Gastrocnemius medialis (tissue), 4 donors: ENCODE measurements at regions of chr14 and their contacts with region 1.

Region 1: DNA sequence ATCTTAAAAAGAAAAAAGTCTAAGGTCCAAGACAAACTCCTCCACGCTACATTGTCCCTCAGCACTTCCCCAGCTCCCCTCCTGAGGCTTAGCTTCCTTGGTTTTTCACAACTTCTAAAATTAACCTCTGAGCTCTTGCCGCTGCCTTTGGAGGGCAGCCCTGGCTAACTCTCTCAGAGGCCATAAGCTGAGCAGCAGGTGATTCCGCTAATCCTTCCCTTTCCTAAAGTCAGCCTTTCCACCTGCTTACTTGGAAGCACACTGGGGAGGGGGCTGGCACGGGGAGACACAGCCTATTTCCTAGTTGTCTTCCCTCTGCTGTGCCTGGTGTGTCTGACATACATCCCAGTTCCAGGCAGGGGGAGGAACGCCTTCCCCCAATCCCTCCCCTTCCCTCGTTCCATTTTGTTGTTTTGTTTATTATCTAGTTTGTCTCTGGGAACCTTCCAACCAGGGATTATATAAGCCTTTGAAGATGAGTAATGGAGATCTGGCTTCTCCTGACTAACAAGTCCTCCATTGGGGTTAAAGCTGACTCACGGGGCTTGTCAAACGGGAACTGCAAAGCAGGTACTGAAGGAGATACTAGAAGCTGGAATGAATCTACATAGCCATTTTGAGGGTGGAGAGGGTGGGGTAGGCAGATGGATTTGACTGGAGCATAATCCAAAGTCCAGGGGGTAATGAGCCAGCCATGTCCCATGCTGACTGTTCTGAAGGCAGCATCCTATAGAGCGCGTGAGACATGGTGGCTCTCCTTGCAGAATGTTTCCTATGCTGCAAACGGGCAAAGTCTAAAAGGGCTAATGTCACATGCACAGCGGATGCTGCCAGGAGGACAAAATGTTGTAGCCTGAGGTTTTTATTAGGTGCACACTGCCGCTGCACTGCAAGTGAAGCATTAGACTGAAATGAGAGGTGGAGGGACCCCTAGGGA is 230.8 kb downstream of the FOXN3 start:
- DNase-seq: peak; percentile 72 to 80
- ATAC-seq: peak; percentile 78 to 84
- H3K4me3 ChIP-seq: peak overlapping the region in 3 of 4 donors; percentile 30 to 36 (median 33)
- H3K27ac ChIP-seq: peak overlapping the region; percentile 89 to 93 (median 92)
- H3K4me1 ChIP-seq: peaks cover 51 to 54% of the 10 kb centered on the region in 2 donors
- H3K27me3 ChIP-seq: no peaks in the 10 kb centered on the region
- CTCF ChIP-seq: no peak
- POLR2A ChIP-seq: peak in 1 of 2 donors; percentile 33

Region 2: GRCh38 chr14:89226801-89227495 is 40.8 kb after region 1 on chr14:
- in situ Hi-C with region 1: no loop called
- intact Hi-C with region 1: loop called (anchors 2 kb)
- DNase-seq: no peak
- ATAC-seq: no peak
- H3K4me3 ChIP-seq: no peak overlapping the region
- H3K27ac ChIP-seq: peak overlapping the region in 3 of 4 donors; percentile 20 to 90 (median 79)
- H3K4me1 ChIP-seq: peaks cover 40 to 56% of the 10 kb centered on the region in 2 donors
- H3K27me3 ChIP-seq: no peaks in the 10 kb centered on the region
- CTCF ChIP-seq: no peak
- POLR2A ChIP-seq: no peak

Region 3: GRCh38 chr14:89252887-89253547 is 66.8 kb after region 1 on chr14:
- in situ Hi-C with region 1: no loop called
- intact Hi-C with region 1: loop called (anchors 2 kb)
- DNase-seq: peak in 1 of 2 donors; percentile 36
- ATAC-seq: peak; percentile 37 to 39
- H3K4me3 ChIP-seq: no peak overlapping the region
- H3K27ac ChIP-seq: peak overlapping the region in 2 of 4 donors; percentile 41 to 50
- H3K4me1 ChIP-seq: peaks cover 55 to 65% of the 10 kb centered on the region in 2 donors
- H3K27me3 ChIP-seq: no peaks in the 10 kb centered on the region
- CTCF ChIP-seq: peak in 3 of 5 experiments; percentile 28 to 47 (median 30)
- POLR2A ChIP-seq: no peak

Region 4: GRCh38 chr14:89303457-89304435 is 117.6 kb after region 1 on chr14:
- in situ Hi-C with region 1: no loop called
- intact Hi-C with region 1: loop called (anchors 1 kb)
- DNase-seq: peak; percentile 53 to 59
- ATAC-seq: peak; percentile 90 to 93
- H3K4me3 ChIP-seq: peak overlapping the region; percentile 38 to 42 (median 40)
- H3K27ac ChIP-seq: peak overlapping the region; percentile 90 to 95 (median 92)
- H3K4me1 ChIP-seq: peaks cover 66 to 77% of the 10 kb centered on the region in 2 donors
- H3K27me3 ChIP-seq: no peaks in the 10 kb centered on the region
- CTCF ChIP-seq: no peak
- POLR2A ChIP-seq: peak; percentile 46 to 73

Region 5: GRCh38 chr14:90587918-90588317 is 1401.7 kb after region 1 on chr14:
- in situ Hi-C with region 1: no loop called
- intact Hi-C with region 1: loop called (anchors 5 kb)
- DNase-seq: peak; percentile 94 to 98
- ATAC-seq: peak; percentile 96 to 97
- H3K4me3 ChIP-seq: no peak overlapping the region
- H3K27ac ChIP-seq: peak overlapping the region; percentile 84 to 91 (median 87)
- H3K4me1 ChIP-seq: peaks cover 16 to 17% of the 10 kb centered on the region in 2 donors
- H3K27me3 ChIP-seq: no peaks in the 10 kb centered on the region
- CTCF ChIP-seq: no peak
- POLR2A ChIP-seq: no peak